ENCODE measurements at regions of chr1 and their contacts with region 1.

Region 1: GRCh38 chr1:174022080-174022975 is at the start of gene RC3H1:
- DNase-seq: peak; percentile 90 to 95
- ATAC-seq: peak; percentile 92 to 97 (median 97)
- H3K4me3 ChIP-seq: peak within 1 kb of the TSS; percentile 92
- H3K27ac ChIP-seq: peak within 1 kb of the TSS; percentile 94
- H3K4me1 ChIP-seq: peaks cover 41% of the 10 kb centered on the region
- H3K27me3 ChIP-seq: no peaks in the 10 kb centered on the region
- CTCF ChIP-seq: no peak
- total RNA-seq, gene RC3H1: 21.8 to 39.1 (median 29.4) TPM

Region 2: GRCh38 chr1:173285048-173285447 is 737.3 kb before region 1 on chr1:
- intact Hi-C with region 1: no loop called
- DNase-seq: no peak
- ATAC-seq: no peak
- H3K4me3 ChIP-seq: no peak overlapping the region
- H3K27ac ChIP-seq: no peak overlapping the region
- H3K4me1 ChIP-seq: no peaks in the 10 kb centered on the region
- H3K27me3 ChIP-seq: no peaks in the 10 kb centered on the region
- CTCF ChIP-seq: no peak

Region 3: GRCh38 chr1:173476664-173477285 is 545.6 kb before region 1 on chr1:
- intact Hi-C with region 1: loop called in 1 of 2 experiments (anchors 2 kb)
- DNase-seq: peak; percentile 95 to 97
- ATAC-seq: peak; percentile 82 to 88 (median 86)
- H3K4me3 ChIP-seq: peak overlapping the region; percentile 88
- H3K27ac ChIP-seq: peak overlapping the region; percentile 99
- H3K4me1 ChIP-seq: peaks cover 44% of the 10 kb centered on the region
- H3K27me3 ChIP-seq: no peaks in the 10 kb centered on the region
- CTCF ChIP-seq: no peak

Region 4: DNA sequence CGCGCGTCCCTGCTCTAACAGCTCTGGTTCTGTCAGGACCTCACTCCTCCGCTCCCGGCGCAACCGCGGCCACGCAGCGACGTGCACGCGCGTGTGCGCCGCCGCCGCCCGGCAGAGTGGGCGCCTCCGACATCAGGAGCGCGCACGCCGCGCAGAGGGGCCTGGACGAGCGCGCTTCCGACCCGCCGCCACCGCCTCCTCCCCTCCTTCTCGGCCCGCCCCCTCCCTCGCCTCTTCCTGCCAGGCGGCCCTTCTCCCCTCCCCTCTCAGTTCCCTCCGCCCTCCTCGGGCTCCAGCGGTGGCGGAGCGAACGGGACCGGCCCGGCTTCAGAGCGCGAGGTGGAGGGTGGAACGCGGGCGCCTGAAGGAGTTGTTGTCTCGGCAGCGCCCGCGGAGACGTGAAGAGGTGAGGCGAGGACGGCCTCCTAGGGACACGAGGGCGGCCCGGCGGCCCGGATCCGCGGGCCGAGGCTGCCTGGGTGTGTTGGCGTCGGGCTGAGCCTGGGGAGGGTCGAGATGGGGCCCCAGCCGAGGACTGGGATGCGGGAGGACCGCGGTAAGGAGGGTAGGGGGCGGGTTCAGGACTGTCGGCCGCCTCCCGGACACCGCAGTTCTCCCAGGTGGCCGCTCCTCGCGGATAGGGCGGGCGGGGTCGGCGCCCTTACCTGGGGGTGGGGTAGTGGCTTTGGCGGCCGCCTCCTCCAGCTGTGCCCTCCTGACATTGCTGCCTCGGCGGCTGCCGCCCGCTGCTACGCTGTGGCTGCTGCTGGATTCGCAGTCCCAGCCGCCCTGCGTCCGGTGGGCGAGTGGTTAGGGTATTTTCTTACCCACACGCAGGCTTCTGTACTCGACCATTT is 137.2 kb after region 1 on chr1 and contains the start of gene RABGAP1L:
- intact Hi-C with region 1: loop called (anchors 5 kb)
- DNase-seq: peak; percentile 95 to 97
- ATAC-seq: peak; percentile 96 to 98 (median 97)
- H3K4me3 ChIP-seq: peak within 1 kb of the TSS; percentile 80
- H3K27ac ChIP-seq: peak within 1 kb of the TSS; percentile 85
- H3K4me1 ChIP-seq: peaks cover 12% of the 10 kb centered on the region
- H3K27me3 ChIP-seq: no peaks in the 10 kb centered on the region
- CTCF ChIP-seq: no peak
- total RNA-seq, gene RABGAP1L: 8.7 to 14.4 (median 11.7) TPM

Region 5: GRCh38 chr1:174204697-174205308 is 182.5 kb after region 1 on chr1:
- intact Hi-C with region 1: loop called in 1 of 2 experiments (anchors 10 kb)
- DNase-seq: no peak
- ATAC-seq: no peak
- H3K4me3 ChIP-seq: no peak overlapping the region
- H3K27ac ChIP-seq: no peak overlapping the region
- H3K4me1 ChIP-seq: peaks cover 12% of the 10 kb centered on the region
- H3K27me3 ChIP-seq: no peaks in the 10 kb centered on the region
- CTCF ChIP-seq: no peak

Measured in psoas muscle (tissue), 8 donors.